ENCODE measurements at regions of chr1 and their contacts with region 1.

Region 1: GRCh38 chr1:183471743-183472487 is 384 bp upstream of the SMG7 start:
- DNase-seq: peak; percentile 98
- H3K4me3 Mint-ChIP-seq: peak overlapping the region; percentile 85
- H3K27ac Mint-ChIP-seq: peak overlapping the region; percentile 99
- H3K4me1 Mint-ChIP-seq: peaks cover 20% of the 10 kb centered on the region
- H3K27me3 Mint-ChIP-seq: no peaks in the 10 kb centered on the region

Region 2: GRCh38 chr1:182839209-182840065 is 632.5 kb before region 1 on chr1 and contains the start of gene DHX9:
- CTCF ChIA-PET with region 1: no interaction called
- POLR2A ChIA-PET with region 1: no interaction called
- intact Hi-C with region 1: loop called (anchors 2 kb)
- DNase-seq: peak; percentile 96
- H3K4me3 Mint-ChIP-seq: peak within 1 kb of the TSS; percentile 98
- H3K27ac Mint-ChIP-seq: peak within 1 kb of the TSS; percentile 97
- H3K4me1 Mint-ChIP-seq: peaks cover 38% of the 10 kb centered on the region
- H3K27me3 Mint-ChIP-seq: no peaks in the 10 kb centered on the region
- total RNA-seq, gene DHX9: 212 to 215 TPM

Region 3: DNA sequence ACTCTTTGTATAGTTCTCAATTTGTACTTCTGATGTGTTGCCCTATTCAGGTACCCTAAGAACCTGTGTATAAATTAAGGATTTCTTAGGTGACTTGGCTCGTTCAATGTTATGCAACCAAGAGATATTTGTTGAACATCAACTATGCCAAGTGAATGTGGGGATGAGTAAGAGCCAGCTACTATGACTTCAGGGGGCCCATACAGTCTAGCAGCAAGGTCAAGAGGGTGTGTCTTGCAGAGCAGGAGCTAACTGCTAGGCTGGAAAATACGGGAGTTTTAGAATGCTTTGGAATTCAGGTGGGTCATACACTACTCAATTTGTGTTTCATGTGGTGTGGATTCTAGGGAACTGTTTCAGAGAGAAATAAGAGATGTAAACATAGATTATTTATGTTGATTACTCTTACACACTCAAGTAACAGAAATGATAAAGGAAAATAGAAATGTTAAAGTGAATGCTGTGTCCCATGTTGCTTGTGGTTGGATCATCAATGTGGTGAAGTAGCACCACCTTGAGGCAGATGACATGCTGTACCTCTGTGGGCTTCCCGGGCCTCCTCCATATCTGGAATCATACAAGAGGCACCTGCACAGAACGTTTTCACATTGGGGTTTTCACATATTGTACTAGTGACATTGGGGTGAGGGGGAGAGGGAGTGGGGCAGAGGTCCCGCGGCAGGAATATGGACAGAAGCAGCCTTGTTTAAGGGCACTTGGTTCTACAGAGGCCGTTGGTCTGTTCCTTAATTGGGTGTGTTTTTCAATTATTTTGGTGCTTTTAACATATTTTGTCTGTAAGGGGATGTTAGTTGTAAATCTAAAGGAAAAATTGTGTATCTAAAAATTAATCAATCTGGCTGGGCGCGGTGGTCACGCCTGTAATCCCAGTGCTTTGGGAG is 151.2 kb after region 1 on chr1:
- CTCF ChIA-PET with region 1: interaction called, 6 read pairs
- POLR2A ChIA-PET with region 1: no interaction called
- intact Hi-C with region 1: loop called (anchors 1 kb)
- DNase-seq: peak; percentile 63
- H3K4me3 Mint-ChIP-seq: no peak overlapping the region
- H3K27ac Mint-ChIP-seq: no peak overlapping the region
- H3K4me1 Mint-ChIP-seq: peaks cover 4% of the 10 kb centered on the region
- H3K27me3 Mint-ChIP-seq: no peaks in the 10 kb centered on the region

Region 4: DNA sequence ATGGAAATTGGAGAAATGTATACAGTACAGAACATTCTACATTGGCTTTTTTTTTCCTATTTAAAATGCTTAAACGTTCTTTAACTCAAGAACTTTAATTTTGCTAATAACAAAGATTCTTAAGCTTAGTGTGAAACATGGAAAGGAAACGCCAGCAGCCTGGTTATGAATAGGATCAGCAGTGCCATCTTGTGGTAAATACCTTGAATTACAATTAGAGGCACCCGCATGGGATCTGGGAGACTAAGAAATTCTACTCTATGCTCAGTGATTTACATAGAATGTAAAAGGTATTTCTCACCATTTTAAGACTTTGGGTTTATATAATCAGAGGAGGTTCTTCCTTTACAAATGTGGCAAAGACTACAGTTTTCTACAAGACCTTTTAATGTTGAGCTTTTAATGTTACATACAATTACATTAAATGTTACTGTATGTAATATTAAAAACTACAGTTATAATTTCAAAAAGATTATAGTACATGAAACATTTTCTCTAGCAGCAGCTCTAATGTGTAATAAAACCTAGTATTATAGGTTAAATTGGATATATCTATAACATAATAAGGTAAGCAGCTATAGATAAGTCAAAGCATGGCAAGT is 213.3 kb after region 1 on chr1:
- CTCF ChIA-PET with region 1: interaction called, 3 read pairs
- POLR2A ChIA-PET with region 1: no interaction called
- intact Hi-C with region 1: loop called (anchors 1 kb)
- DNase-seq: peak; percentile 23
- H3K4me3 Mint-ChIP-seq: no peak overlapping the region
- H3K27ac Mint-ChIP-seq: no peak overlapping the region
- H3K4me1 Mint-ChIP-seq: peaks cover 2% of the 10 kb centered on the region
- H3K27me3 Mint-ChIP-seq: peaks cover 3% of the 10 kb centered on the region

Region 5: DNA sequence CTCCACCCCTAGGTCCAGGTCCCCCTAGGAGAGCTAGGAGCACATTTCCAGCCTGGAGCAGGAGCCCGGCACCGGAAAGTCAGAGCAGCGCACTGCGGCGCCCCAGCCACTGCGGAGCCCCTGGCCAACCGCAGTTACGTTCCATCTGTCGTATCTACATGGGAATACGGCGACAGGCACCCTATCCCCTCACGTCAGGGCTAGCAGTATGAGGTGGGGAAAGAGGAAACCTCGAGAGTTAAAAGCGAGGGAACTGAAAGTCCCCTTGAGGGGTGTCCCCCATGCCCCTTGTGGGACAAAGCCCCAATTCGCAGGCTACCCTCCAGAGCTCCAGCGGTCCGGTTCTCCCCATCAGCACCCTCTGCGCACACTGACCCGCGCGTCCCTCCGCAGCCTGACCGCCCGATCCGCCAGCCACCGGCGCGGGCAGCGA is 564.6 kb after region 1 on chr1:
- CTCF ChIA-PET with region 1: no interaction called
- POLR2A ChIA-PET with region 1: no interaction called
- intact Hi-C with region 1: loop called (anchors 2 kb)
- DNase-seq: peak; percentile 23
- H3K4me3 Mint-ChIP-seq: peak overlapping the region; percentile 62
- H3K27ac Mint-ChIP-seq: no peak overlapping the region
- H3K4me1 Mint-ChIP-seq: peaks cover 12% of the 10 kb centered on the region
- H3K27me3 Mint-ChIP-seq: peaks cover 50% of the 10 kb centered on the region

Region 6: DNA sequence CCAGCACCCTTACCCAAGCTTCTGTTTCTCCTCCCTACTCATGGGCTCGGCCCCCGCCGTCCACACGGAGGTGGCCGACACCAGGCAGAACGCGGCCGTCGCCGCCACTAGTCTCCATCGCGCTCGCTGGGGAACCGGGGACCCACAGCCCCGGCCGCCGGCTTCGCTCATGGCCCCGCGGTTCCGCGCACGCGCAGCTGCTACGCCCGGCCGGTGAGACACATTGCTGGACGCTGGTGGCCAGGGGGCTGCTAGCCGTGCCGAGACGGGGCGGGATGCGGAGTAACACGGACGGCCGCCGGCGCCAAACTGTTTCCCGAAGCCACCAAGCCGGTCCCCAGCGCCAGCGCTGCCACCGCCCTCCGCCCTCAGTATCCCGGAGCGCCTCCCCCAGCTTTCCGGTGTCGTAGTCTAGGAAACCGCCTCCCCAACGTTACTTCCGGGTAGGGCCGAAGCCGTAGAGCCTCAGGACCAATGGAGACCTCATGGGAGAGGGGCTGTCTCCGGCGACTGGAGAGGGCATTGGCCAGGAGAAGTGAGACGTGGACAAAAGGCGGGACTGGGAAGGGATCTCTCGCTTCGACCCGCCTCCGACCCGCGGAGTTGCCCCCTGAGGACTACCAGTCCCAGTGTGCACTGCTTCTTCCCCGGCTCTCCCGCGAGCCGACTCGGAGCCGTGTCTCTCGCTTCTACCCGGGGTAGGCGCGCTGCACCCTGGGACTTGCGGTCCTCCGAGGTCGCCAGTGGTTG is 1282.7 kb after region 1 on chr1 and contains the start of gene EDEM3:
- CTCF ChIA-PET with region 1: no interaction called
- POLR2A ChIA-PET with region 1: no interaction called
- intact Hi-C with region 1: loop called (anchors 5 kb)
- DNase-seq: peak; percentile 99
- H3K4me3 Mint-ChIP-seq: peak within 1 kb of the TSS; percentile 93
- H3K27ac Mint-ChIP-seq: peak within 1 kb of the TSS; percentile 93
- H3K4me1 Mint-ChIP-seq: peaks cover 38% of the 10 kb centered on the region
- H3K27me3 Mint-ChIP-seq: peaks cover 2% of the 10 kb centered on the region
- total RNA-seq, gene EDEM3: 14.5 to 15.2 TPM

Region 7: GRCh38 chr1:185156854-185157598 is 1685.1 kb after region 1 on chr1 and contains the starts of genes SWT1 and TRMT1L:
- CTCF ChIA-PET with region 1: no interaction called
- POLR2A ChIA-PET with region 1: no interaction called
- intact Hi-C with region 1: loop called (anchors 1 kb)
- DNase-seq: peak; percentile 99
- H3K4me3 Mint-ChIP-seq: peak within 1 kb of the TSS; percentile 86
- H3K27ac Mint-ChIP-seq: peak within 1 kb of the TSS; percentile 90
- H3K4me1 Mint-ChIP-seq: peaks cover 53% of the 10 kb centered on the region
- H3K27me3 Mint-ChIP-seq: no peaks in the 10 kb centered on the region
- total RNA-seq, gene SWT1: 2.3 to 3.0 TPM
- total RNA-seq, gene TRMT1L: 28.6 to 34.4 TPM

Measured in activated CD4-positive, alpha-beta memory T cell treated with anti-CD3 and anti-CD28 coated beads for 36 hours (primary cell).